Activated B cell treated with CpG ODN at 0.5 μM for 24 hours (primary cell): ENCODE measurements at regions of chr20 and their contacts with region 1.

Region 1: DNA sequence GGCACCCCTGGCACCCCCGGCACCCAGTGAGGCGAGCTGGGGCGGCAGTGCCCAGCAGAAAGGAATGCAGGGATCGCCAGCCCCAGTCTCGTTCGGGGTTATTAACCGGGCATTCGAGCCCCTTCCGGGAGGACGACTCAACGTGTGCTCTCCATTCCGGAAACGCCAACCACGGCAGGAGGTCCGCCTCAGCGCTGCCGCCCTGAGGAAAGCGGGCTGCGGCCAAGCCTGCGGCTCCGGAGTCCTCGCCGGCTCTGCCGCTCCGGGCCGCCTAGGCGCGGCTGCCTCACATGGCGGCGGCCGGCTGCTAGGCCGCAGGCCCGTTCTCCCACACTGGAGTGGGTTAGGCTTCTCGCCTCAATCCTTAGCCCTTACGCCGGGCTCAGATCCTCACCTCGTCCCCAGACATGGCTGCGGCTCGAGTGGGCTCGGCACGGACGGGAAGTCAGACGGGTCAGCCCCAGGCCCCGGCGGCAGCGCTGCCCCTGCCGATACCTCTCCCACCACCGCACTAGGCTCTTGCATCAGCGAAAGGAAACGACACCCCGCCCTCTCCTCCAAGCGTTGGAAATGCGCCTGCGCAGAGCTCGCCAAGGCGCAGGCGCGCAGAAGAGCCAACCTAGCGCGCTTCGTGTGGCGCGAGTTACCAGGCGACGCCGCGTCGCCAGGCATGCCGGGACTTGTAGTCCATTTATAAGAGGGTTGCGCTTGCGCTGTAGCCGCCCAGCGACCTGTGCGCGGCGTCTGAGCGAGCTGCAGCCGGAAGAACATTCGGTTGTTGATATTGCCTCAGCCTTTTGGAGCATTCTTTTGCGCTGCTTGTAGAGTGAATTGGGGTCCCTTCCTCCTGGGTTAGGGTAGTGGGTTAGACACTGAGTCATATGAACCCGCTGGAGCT is at the start of gene EIF2S2:
- DNase-seq: peak; percentile 87
- ATAC-seq: peak; percentile 84
- H3K4me3 Mint-ChIP-seq: peak within 1 kb of the TSS; percentile 96
- H3K27ac Mint-ChIP-seq: peak within 1 kb of the TSS; percentile 98
- H3K4me1 Mint-ChIP-seq: peaks cover 49% of the 10 kb centered on the region
- H3K27me3 Mint-ChIP-seq: no peaks in the 10 kb centered on the region
- CTCF ChIP-seq: no peak
- total RNA-seq, gene EIF2S2: 58.3 and 62.2 TPM in 2 replicates

Region 2: DNA sequence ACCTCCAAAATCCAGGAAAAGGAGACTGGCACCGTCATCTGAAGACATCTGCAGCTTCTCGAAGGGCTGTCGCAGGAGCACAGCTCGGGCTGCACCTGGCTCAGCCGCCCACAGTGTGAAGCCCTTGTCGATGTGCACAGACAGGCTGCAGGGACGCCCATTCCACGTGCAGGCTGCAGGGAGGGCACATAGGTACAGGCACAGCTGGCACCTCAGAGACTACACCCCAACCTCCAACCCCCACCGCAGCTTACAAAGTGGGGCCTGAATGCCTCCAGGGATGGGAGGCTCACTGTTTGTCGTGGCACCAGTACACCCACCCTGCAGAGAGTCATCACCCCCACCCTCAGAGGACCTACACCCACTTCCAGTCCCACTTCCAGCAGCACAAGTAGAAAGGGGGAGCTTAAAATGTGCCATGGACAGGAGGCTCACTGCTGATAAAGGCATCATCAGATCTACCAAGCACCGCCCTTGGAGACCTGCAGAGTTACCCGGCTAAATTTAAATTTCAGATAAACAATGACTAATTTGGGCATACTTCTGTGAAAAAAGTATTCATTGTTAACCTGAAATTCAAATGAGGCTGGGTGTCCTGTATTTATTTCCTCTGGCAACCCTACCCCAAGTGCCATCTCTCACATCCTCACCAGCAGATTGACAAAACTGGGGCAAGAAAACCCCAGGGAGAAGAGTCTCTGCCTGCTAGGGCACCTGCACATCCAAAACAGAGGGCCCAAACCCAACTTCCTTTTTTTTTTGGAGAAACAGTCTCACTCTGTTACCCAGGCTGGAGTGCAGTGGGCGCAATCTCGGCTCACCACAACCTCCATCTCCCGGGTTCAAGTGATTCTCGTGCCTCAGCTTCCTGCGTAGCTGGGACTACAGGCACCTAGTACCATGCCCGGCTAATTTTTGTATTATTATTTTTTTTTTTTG is 703.0 kb before region 1 on chr20:
- CTCF ChIA-PET with region 1: interaction called, 5 read pairs
- POLR2A ChIA-PET with region 1: no interaction called
- intact Hi-C with region 1: loop called (anchors 2 kb)
- DNase-seq: peak; percentile 39
- ATAC-seq: peak; percentile 90
- H3K4me3 Mint-ChIP-seq: peak overlapping the region; percentile 61
- H3K27ac Mint-ChIP-seq: peak overlapping the region; percentile 90
- H3K4me1 Mint-ChIP-seq: peaks cover 44% of the 10 kb centered on the region
- H3K27me3 Mint-ChIP-seq: no peaks in the 10 kb centered on the region
- CTCF ChIP-seq: no peak

Region 3: DNA sequence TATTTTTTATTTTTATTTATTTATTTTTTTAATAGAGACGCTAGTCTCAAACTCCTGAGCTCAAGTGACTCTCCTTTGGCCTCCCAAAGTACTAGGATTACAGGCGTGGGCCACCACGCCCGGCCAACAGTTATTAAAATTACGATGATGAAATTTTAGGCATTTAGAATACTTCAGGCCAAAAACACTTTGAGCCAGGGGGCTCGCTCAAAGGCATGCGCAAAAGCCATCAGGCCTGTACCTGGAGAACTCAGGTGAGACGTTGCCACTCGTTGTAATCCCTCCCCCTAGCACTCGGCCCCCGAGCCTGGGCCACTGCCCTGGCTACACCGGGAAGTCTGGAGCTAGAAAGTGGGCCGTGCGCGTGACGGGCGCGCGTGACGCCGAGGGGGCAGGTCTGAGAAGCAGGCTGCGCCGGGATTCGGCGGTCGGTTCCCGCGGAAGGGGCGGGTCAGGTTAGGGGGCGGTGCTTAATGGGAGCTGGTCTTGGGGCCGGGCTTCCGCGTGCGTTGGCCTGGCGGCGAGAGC is 622.4 kb before region 1 on chr20:
- CTCF ChIA-PET with region 1: no interaction called
- POLR2A ChIA-PET with region 1: interaction called, 9 read pairs
- intact Hi-C with region 1: loop called (anchors 2 kb)
- DNase-seq: peak; percentile 99
- ATAC-seq: peak; percentile 96
- H3K4me3 Mint-ChIP-seq: peak overlapping the region; percentile 84
- H3K27ac Mint-ChIP-seq: peak overlapping the region; percentile 88
- H3K4me1 Mint-ChIP-seq: peaks cover 15% of the 10 kb centered on the region
- H3K27me3 Mint-ChIP-seq: no peaks in the 10 kb centered on the region
- CTCF ChIP-seq: no peak

Region 4: GRCh38 chr20:33836277-33836676 is 275.7 kb before region 1 on chr20:
- CTCF ChIA-PET with region 1: no interaction called
- POLR2A ChIA-PET with region 1: interaction called, 16 read pairs
- intact Hi-C with region 1: no loop called
- DNase-seq: no peak
- ATAC-seq: no peak
- H3K4me3 Mint-ChIP-seq: no peak overlapping the region
- H3K27ac Mint-ChIP-seq: no peak overlapping the region
- H3K4me1 Mint-ChIP-seq: peaks cover 76% of the 10 kb centered on the region
- H3K27me3 Mint-ChIP-seq: no peaks in the 10 kb centered on the region
- CTCF ChIP-seq: no peak

Region 5: GRCh38 chr20:34165018-34165619 is 53.2 kb after region 1 on chr20:
- CTCF ChIA-PET with region 1: no interaction called
- POLR2A ChIA-PET with region 1: interaction called, 11 read pairs
- intact Hi-C with region 1: no loop called
- DNase-seq: no peak
- ATAC-seq: no peak
- H3K4me3 Mint-ChIP-seq: no peak overlapping the region
- H3K27ac Mint-ChIP-seq: no peak overlapping the region
- H3K4me1 Mint-ChIP-seq: no peaks in the 10 kb centered on the region
- H3K27me3 Mint-ChIP-seq: peaks cover 7% of the 10 kb centered on the region
- CTCF ChIP-seq: no peak

Region 6: DNA sequence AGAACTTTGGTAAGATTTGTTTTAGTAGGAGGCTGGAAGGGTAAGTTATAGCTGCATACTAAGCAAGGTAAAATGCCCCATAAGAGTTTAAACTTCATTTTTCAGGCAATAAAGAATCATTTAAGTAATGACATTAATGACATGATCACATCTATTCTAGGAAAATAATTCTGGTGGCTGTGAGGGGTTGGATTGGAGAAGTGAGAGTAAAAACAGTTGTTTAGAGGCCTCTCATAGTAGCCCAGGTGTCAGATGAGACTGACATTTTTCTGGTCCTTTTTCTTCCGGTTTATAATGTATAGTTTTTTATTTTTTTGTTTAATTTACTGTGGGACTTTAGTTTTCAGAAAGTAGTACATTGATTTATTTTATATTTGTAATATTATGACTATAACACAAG is 292.0 kb after region 1 on chr20:
- CTCF ChIA-PET with region 1: no interaction called
- POLR2A ChIA-PET with region 1: no interaction called
- intact Hi-C with region 1: no loop called
- DNase-seq: no peak
- ATAC-seq: peak; percentile 60
- H3K4me3 Mint-ChIP-seq: peak overlapping the region; percentile 24
- H3K27ac Mint-ChIP-seq: peak overlapping the region; percentile 68
- H3K4me1 Mint-ChIP-seq: peaks cover 53% of the 10 kb centered on the region
- H3K27me3 Mint-ChIP-seq: no peaks in the 10 kb centered on the region
- CTCF ChIP-seq: no peak